A549 (cell line): ENCODE measurements at regions of chr19 and their contacts with region 1.

Region 1: GRCh38 chr19:36489118-36489919 is at the start of gene ZNF566:
- DNase-seq: peak; percentile 100
- ATAC-seq: peak; percentile 97 to 98
- H3K4me3 ChIP-seq: peak within 1 kb of the TSS; percentile 52
- H3K27ac ChIP-seq: peak within 1 kb of the TSS; percentile 89
- H3K4me1 ChIP-seq: peaks cover 4% of the 10 kb centered on the region; the same call in 1 of the 3 replicates
- CTCF ChIP-seq: no peak
- EP300 ChIP-seq: no peak
- POLR2A ChIP-seq: peak; percentile 67
- RAD21 ChIP-seq: no peak
- polyA plus RNA-seq, gene ZNF566: 12.6 and 13.0 TPM in 2 replicates

Region 2: GRCh38 chr19:36214386-36215275 is 274.7 kb before region 1 on chr19 and contains the starts of genes ZNF146 and ZNF565:
- CTCF ChIA-PET with region 1: no interaction called
- POLR2A ChIA-PET with region 1: interaction called, 10 read pairs
- DNase-seq: peak; percentile 100
- ATAC-seq: peak; percentile 95 to 96
- H3K4me3 ChIP-seq: peak within 1 kb of the TSS; percentile 63
- H3K27ac ChIP-seq: peak within 1 kb of the TSS; percentile 87 to 91
- H3K4me1 ChIP-seq: 0 out of 3 replicates have a peak, but pooled peaks cover 3% of the 10 kb centered on the region
- CTCF ChIP-seq: no peak
- EP300 ChIP-seq: no peak
- POLR2A ChIP-seq: peak; percentile 97
- RAD21 ChIP-seq: no peak
- polyA plus RNA-seq, gene ZNF146: 293 and 362 TPM in 2 replicates
- polyA plus RNA-seq, gene ZNF565: 5.6 and 6.8 TPM in 2 replicates

Region 3: GRCh38 chr19:36378625-36379509 is 110.5 kb before region 1 on chr19 and contains the start of gene ZFP14:
- CTCF ChIA-PET with region 1: interaction called, 4 read pairs
- POLR2A ChIA-PET with region 1: interaction called, 13 read pairs
- DNase-seq: peak; percentile 98 to 100
- ATAC-seq: peak; percentile 99
- H3K4me3 ChIP-seq: peak within 1 kb of the TSS; percentile 61
- H3K27ac ChIP-seq: peak within 1 kb of the TSS; percentile 73 to 85
- H3K4me1 ChIP-seq: peaks cover 5% of the 10 kb centered on the region; the same call in 2 of the 3 replicates
- CTCF ChIP-seq: peak; percentile 34
- EP300 ChIP-seq: no peak
- POLR2A ChIP-seq: peak; percentile 80
- RAD21 ChIP-seq: peak; percentile 61 to 71
- polyA plus RNA-seq, gene ZFP14: 5.8 and 7.1 TPM in 2 replicates

Region 4: DNA sequence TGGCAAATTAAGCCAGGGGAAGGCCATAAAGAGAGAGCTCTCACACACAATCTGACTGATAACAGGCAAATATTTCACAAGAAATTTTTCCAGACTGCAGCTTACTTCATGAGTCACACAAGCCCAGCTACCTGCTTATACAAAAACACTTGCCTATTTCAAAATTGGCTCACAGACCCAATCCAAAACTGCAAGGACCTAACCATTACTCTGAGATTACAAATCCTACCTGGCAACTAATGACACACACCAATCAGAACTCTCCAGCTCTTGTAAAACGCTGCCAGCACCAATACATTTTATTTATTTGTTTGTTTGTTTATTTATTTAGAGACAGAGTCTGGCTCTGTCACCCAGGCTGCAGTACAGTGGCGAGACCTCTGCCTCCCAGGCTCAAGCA is 52.8 kb before region 1 on chr19:
- CTCF ChIA-PET with region 1: no interaction called
- POLR2A ChIA-PET with region 1: no interaction called
- DNase-seq: peak in 1 of 2 experiments; percentile 38
- ATAC-seq: peak in 1 of 2 experiments; percentile 27; a peak in 1 of 6 replicates
- H3K4me3 ChIP-seq: no peak overlapping the region
- H3K27ac ChIP-seq: no peak overlapping the region
- H3K4me1 ChIP-seq: no peaks in the 10 kb centered on the region
- CTCF ChIP-seq: no peak
- EP300 ChIP-seq: no peak
- POLR2A ChIP-seq: no peak
- RAD21 ChIP-seq: no peak

Region 5: GRCh38 chr19:36528194-36528920 is 39.0 kb after region 1 on chr19 and contains the start of gene ZNF260:
- CTCF ChIA-PET with region 1: interaction called, 4 read pairs
- POLR2A ChIA-PET with region 1: interaction called, 49 read pairs
- DNase-seq: peak; percentile 97 to 99
- ATAC-seq: peak; percentile 96 to 97
- H3K4me3 ChIP-seq: peak within 1 kb of the TSS; percentile 62
- H3K27ac ChIP-seq: peak within 1 kb of the TSS; percentile 84 to 87
- H3K4me1 ChIP-seq: no peaks in the 10 kb centered on the region
- CTCF ChIP-seq: no peak
- EP300 ChIP-seq: no peak
- POLR2A ChIP-seq: peak; percentile 86
- RAD21 ChIP-seq: no peak
- polyA plus RNA-seq, gene ZNF260: 19.3 and 25.6 TPM in 2 replicates

Region 6: DNA sequence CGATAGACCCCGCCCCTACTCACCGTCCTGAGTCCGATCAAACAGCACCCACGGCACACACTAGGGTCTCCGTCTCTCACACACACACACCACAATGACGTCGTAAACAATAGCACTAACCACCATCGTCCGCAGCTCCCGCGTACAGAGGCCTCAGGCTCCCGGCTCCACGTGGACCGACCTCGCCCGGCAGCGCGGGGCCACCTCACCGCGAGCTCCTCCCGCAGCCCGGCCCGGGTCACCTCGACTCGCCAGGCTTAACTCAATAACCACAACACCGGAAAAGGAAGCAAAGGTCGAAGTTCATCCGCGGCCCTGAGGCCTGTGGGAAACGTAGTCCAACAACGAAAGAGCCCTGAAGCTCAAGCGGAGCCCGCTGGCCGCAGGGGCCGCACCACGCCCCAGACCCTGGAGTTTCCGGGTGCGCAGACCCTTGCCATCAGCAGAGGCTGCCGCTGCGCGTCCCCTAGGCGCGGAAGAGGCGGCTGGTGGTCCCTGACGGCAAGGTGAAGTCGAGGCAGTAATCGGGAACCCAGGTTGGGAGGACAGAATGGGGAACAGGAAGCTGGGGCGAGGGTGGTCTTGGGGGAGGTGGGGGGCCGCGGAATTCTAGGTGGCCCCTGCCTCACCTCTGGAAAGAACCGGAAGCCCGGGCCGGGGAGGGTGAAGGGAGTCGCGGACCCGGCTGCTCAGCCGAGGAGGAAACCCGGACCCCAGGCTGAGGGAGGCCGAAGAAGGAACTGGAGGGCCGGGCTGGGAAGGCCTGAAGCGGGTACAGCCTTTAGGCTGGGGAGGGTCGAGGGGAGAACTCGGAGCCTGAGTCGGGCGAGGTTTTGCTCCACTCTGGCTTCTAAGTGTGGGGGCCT is 83.9 kb after region 1 on chr19 and contains the start of gene ZNF529:
- CTCF ChIA-PET with region 1: no interaction called
- POLR2A ChIA-PET with region 1: interaction called, 18 read pairs
- DNase-seq: peak; percentile 93 to 97
- ATAC-seq: peak; percentile 99
- H3K4me3 ChIP-seq: peak within 1 kb of the TSS; percentile 71
- H3K27ac ChIP-seq: peak within 1 kb of the TSS; percentile 72 to 86
- H3K4me1 ChIP-seq: no peaks in the 10 kb centered on the region
- CTCF ChIP-seq: no peak
- EP300 ChIP-seq: no peak
- POLR2A ChIP-seq: peak; percentile 60
- RAD21 ChIP-seq: no peak
- polyA plus RNA-seq, gene ZNF529: 6.0 and 7.0 TPM in 2 replicates

Region 7: DNA sequence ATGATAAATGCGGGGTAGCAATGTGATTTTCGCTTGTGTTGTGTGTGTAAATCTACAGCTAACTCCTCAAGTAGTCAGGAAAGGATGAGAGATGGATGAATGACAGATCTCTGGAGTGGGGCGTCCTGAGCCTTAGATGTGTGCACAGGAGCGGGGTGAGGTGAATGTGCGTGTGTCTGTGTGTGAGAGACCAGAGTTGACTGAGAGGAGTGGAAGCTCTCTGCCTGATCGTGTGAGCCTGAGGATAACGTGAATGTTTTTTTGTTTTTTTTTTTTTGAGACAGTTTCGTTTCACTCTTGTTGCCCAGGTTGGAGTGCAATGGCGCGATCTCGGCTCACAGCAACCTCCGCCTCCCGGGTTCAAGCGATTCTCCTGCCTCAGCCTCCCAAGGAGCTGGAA is 176.5 kb after region 1 on chr19:
- CTCF ChIA-PET with region 1: no interaction called
- POLR2A ChIA-PET with region 1: interaction called, 11 read pairs
- DNase-seq: no peak
- ATAC-seq: no peak
- H3K4me3 ChIP-seq: peak overlapping the region; percentile 77
- H3K27ac ChIP-seq: peak overlapping the region; percentile 79 to 85
- H3K4me1 ChIP-seq: no peaks in the 10 kb centered on the region
- CTCF ChIP-seq: no peak
- EP300 ChIP-seq: no peak
- POLR2A ChIP-seq: no peak
- RAD21 ChIP-seq: no peak